A673 (cell line): ENCODE measurements at regions of chr12 and their contacts with region 1.

Region 1: DNA sequence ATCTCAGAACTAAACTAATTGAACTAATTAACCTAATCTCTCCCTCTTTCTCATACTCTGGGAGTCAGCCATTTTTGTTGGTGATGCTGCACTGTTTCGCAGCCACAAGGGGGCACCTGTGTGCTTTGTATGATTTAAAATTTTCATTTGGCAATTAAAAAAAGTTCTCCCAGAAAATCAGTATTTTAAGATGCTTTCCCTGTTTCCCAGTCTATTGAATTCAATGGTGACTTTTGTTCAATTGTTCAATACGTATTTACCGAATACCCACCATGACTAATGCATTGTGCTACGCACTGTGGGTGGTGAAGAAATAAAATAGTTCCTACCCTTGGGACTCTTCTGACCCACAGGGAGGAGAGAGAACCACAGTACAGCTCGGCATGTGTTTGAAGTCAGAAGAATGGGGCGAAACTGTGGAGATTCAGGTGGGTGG is 63.7 kb downstream of the ZNF664 start:
- DNase-seq: peak; percentile 59
- H3K4me3 ChIP-seq: no peak overlapping the region
- H3K27ac ChIP-seq: no peak overlapping the region
- H3K4me1 ChIP-seq: peaks cover 30% of the 10 kb centered on the region
- H3K27me3 ChIP-seq: no peaks in the 10 kb centered on the region
- CTCF ChIP-seq: peak; percentile 94

Region 2: GRCh38 chr12:123731596-123731995 is 305.1 kb before region 1 on chr12:
- CTCF ChIA-PET with region 1: no interaction called
- POLR2A ChIA-PET with region 1: no interaction called
- intact Hi-C with region 1: no loop called
- DNase-seq: no peak
- H3K4me3 ChIP-seq: no peak overlapping the region
- H3K27ac ChIP-seq: no peak overlapping the region
- H3K4me1 ChIP-seq: no peaks in the 10 kb centered on the region
- H3K27me3 ChIP-seq: no peaks in the 10 kb centered on the region
- CTCF ChIP-seq: no peak

Region 3: DNA sequence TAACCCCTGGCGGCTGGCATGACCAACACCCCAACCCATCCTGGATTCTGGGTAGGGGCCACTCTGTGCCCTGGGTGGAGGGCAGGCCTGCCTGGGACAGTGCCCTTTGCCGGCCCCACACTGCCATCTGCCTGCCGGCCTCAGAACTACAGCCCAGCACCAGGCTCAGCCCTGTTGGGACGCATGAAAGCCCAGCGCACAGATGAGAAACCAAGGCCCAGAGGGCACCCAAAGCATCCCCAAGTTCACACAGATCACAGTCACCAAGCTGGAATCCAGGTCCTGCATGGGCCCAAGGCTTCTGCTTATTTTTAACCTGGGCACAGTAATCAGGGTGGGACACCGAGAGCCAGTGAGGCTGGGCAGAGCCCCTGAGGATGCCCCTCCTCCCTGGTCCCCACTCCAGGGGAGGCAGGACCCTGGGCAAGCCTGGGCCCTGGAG is 284.4 kb after region 1 on chr12:
- CTCF ChIA-PET with region 1: no interaction called
- POLR2A ChIA-PET with region 1: no interaction called
- intact Hi-C with region 1: loop called (anchors 1 kb)
- DNase-seq: peak; percentile 56
- H3K4me3 ChIP-seq: no peak overlapping the region
- H3K27ac ChIP-seq: no peak overlapping the region
- H3K4me1 ChIP-seq: no peaks in the 10 kb centered on the region
- H3K27me3 ChIP-seq: no peaks in the 10 kb centered on the region
- CTCF ChIP-seq: peak; percentile 86

Region 4: DNA sequence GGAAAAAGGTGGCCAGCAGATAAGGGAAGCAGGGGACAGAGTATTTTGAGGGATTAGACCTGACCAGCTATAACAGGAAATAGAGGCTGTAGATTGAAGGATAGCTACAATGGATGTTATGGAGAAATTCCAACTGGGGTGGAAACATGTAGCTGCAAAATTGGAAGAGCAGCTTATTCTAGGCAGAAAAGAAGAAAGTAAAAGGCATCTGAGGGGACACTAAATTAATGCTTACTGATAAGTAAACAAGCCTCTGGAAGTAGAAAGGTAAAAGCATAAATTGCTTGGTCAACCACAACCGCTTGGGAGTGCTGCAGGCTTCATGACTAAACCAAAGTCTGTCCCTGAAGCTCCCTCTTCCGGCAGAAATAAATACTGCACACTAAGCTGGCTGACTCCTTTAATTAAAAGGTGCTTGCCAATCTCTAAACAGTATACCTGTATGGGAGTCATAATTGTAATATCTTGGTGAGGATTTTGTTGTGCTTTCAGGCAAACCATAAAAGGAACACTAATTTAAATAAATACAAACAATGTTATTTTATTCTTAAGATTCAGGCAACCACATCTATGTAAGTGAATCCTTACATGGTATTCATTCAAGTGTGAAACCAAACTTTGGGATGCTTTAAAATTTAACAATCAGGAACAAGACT is 870.0 kb after region 1 on chr12:
- CTCF ChIA-PET with region 1: no interaction called
- POLR2A ChIA-PET with region 1: no interaction called
- intact Hi-C with region 1: loop called (anchors 10 kb)
- DNase-seq: peak; percentile 92
- H3K4me3 ChIP-seq: no peak overlapping the region
- H3K27ac ChIP-seq: no peak overlapping the region
- H3K4me1 ChIP-seq: peaks cover 17% of the 10 kb centered on the region
- H3K27me3 ChIP-seq: no peaks in the 10 kb centered on the region
- CTCF ChIP-seq: peak; percentile 99